CD8-positive, alpha-beta T cell (primary cell): ENCODE measurements at regions of chr16 and their contacts with region 1.

Region 1: GRCh38 chr16:50747207-50747956 is 5.5 kb downstream of the CYLD start:
- DNase-seq: peak in 3 of 9 experiments; percentile 21 to 80 (median 67)
- ATAC-seq: peak; percentile 68
- H3K4me3 ChIP-seq: peak overlapping the region; percentile 12 to 23
- H3K4me3 Mint-ChIP-seq: peak overlapping the region; percentile 80
- H3K27ac ChIP-seq: peak overlapping the region; percentile 47 to 99
- H3K27ac Mint-ChIP-seq: peak overlapping the region; percentile 94
- H3K4me1 ChIP-seq: peaks cover 65% of the 10 kb centered on the region
- H3K4me1 Mint-ChIP-seq: peaks cover 71% of the 10 kb centered on the region
- H3K27me3 ChIP-seq: no peaks in the 10 kb centered on the region
- H3K27me3 Mint-ChIP-seq: no peaks in the 10 kb centered on the region
- CTCF ChIP-seq: peak; percentile 67

Region 2: DNA sequence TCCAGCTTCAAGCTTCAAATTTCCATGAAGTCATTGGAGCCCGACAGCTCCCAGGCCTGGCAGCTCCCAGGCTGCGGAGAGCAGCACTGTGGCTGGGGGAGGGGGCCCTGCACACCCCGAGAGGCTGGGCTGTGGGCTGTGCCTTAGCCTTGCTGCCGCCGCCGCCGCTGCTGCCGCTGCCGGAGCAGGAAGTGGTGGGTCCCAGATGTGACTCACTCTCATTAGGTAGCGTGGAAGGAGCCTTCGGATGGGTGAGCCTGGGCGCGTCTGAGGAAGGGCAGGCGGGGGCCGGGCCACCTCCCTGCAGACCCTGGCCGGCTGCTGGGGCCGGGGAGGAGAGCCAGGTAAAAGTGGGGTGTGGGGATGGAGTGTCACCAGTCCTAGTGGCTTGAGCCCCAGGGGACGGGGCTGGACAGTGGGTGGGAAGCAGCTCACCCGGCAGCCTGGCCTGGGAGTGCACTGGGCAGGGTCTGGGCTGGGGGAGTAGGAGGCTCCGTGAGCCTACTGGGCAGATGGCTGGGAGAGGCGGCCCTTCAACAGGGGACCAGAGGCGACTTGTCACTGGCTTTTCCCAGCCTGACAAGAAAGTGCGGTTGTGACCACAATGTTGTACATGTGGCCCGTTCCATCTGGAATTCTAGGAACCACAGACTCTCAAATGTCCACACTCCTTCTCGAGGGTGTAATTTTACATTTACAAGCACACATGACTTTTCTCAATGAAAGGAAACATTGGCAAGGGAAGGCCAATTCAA is 480.9 kb before region 1 on chr16 and contains the start of gene ADCY7:
- CTCF ChIA-PET with region 1: no interaction called
- POLR2A ChIA-PET with region 1: no interaction called
- intact Hi-C with region 1: loop called (anchors 5 kb)
- DNase-seq: peak; percentile 58 to 90 (median 88)
- ATAC-seq: peak; percentile 83
- H3K4me3 ChIP-seq: peak within 1 kb of the TSS; percentile 91 to 94
- H3K4me3 Mint-ChIP-seq: peak within 1 kb of the TSS; percentile 97
- H3K27ac ChIP-seq: peak within 1 kb of the TSS; percentile 77 to 86
- H3K27ac Mint-ChIP-seq: peak within 1 kb of the TSS; percentile 98
- H3K4me1 ChIP-seq: peaks cover 68% of the 10 kb centered on the region
- H3K4me1 Mint-ChIP-seq: peaks cover 71% of the 10 kb centered on the region
- H3K27me3 ChIP-seq: no peaks in the 10 kb centered on the region
- H3K27me3 Mint-ChIP-seq: no peaks in the 10 kb centered on the region
- CTCF ChIP-seq: no peak
- total RNA-seq, gene ADCY7: 117 to 126 TPM

Region 3: DNA sequence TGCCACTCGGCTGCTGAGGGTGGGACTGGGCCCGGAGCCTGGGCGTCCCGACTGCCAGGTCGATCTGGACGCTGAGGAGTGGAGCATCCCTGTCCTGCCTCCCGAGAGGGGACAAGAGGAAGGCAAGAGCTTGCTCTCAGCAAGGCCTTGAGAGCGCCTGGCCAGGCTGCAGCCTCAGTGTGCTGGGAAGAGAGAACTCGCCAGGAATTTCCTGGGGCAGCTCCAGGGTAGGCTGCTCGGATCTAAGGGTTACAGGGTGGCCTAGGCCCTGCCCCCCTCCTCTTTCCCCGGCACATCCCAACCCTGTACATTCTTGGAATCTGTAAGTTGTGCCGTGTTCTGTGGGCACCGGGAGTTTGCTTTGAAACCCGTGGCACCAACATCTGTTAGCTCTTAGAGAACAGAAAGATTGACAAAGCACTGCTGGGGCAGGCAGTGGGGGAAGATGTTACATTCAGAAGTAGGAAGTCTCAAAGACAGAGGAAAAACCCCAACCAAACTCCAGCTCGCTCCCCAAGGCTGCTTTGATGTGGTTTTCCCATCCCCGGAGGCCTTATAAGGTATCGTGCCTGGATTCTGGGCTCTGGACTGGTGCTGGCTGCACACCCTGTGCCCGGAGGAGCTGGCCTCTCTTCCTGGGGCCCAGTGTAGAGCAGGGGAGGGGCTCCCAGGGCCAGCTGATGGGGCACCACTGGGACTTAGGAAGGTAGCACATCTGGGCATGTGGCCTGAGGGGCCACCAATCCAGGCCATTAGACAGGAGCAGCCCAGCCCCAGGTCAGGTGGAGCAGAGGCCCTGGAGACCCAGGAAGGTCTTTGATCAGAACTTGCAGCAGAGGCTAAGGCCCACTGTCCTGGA is 143.9 kb before region 1 on chr16:
- CTCF ChIA-PET with region 1: no interaction called
- POLR2A ChIA-PET with region 1: no interaction called
- intact Hi-C with region 1: loop called in 1 of 2 experiments (anchors 5 kb)
- DNase-seq: peak in 2 of 9 experiments; percentile 11 to 32
- ATAC-seq: no peak
- H3K4me3 ChIP-seq: no peak overlapping the region
- H3K4me3 Mint-ChIP-seq: peak overlapping the region; percentile 15
- H3K27ac ChIP-seq: no peak overlapping the region
- H3K27ac Mint-ChIP-seq: no peak overlapping the region
- H3K4me1 ChIP-seq: peaks cover 25% of the 10 kb centered on the region
- H3K4me1 Mint-ChIP-seq: peaks cover 30% of the 10 kb centered on the region
- H3K27me3 ChIP-seq: no peaks in the 10 kb centered on the region
- H3K27me3 Mint-ChIP-seq: no peaks in the 10 kb centered on the region
- CTCF ChIP-seq: no peak

Region 4: DNA sequence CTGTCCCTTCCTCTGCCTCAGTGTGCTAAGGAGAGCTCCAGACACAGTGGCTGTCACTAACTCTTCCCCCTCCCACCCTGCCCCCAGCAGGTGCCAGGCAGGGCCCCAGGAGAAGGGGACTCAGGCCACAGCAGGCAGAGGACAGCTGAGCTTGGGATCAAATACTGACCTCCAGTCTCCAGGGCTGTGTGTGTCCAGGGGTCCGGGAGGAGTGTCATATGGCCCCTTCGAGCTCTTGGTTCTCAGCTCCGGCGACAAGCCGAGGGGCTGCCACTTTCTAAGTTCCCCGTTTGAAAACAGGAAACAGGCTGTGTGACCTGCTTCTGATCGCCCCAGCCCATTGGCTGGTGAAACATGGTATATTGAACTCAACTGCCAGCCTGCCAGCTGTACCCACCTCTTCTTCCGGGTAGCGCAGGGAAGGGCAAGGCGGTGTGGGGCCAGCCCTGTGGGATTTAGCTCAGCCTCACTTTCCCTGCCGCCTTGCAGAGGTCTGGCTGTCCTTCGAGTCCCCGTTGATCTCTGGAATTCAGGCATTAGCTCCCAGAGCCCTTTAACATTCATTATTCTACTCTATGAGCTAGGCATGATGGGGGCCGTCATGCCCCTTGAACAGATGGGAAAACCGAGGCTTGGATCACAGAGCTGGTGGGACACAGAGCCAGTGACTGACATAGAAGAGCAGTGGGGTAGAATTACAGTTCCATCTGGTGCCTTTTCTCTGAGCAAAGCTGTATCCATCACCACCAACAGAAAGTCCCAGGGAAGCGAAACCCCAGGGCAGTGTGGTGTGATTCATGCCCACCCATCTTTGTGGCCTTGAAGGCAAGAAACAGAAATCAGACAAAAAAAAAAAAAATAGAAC is 66.1 kb before region 1 on chr16 and contains the start of gene SNX20:
- CTCF ChIA-PET with region 1: interaction called, 22 read pairs
- POLR2A ChIA-PET with region 1: interaction called, 7 read pairs
- intact Hi-C with region 1: loop called in 1 of 2 experiments (anchors 2 kb)
- DNase-seq: peak; percentile 43 to 87 (median 72)
- ATAC-seq: peak; percentile 92
- H3K4me3 ChIP-seq: peak within 1 kb of the TSS; percentile 65 to 88
- H3K4me3 Mint-ChIP-seq: peak within 1 kb of the TSS; percentile 92
- H3K27ac ChIP-seq: peak within 1 kb of the TSS; percentile 51 to 86
- H3K27ac Mint-ChIP-seq: peak within 1 kb of the TSS; percentile 97
- H3K4me1 ChIP-seq: peaks cover 74% of the 10 kb centered on the region
- H3K4me1 Mint-ChIP-seq: peaks cover 85% of the 10 kb centered on the region
- H3K27me3 ChIP-seq: no peaks in the 10 kb centered on the region
- H3K27me3 Mint-ChIP-seq: no peaks in the 10 kb centered on the region
- CTCF ChIP-seq: no peak
- total RNA-seq, gene SNX20: 18.6 to 20.1 TPM

Region 5: GRCh38 chr16:50791522-50791921 is 44.1 kb after region 1 on chr16:
- CTCF ChIA-PET with region 1: no interaction called
- POLR2A ChIA-PET with region 1: no interaction called
- intact Hi-C with region 1: loop called in 1 of 2 experiments (anchors 5 kb)
- DNase-seq: no peak
- ATAC-seq: no peak
- H3K4me3 ChIP-seq: no peak overlapping the region
- H3K4me3 Mint-ChIP-seq: no peak overlapping the region
- H3K27ac ChIP-seq: no peak overlapping the region
- H3K27ac Mint-ChIP-seq: no peak overlapping the region
- H3K4me1 ChIP-seq: no peaks in the 10 kb centered on the region
- H3K4me1 Mint-ChIP-seq: peaks cover 5% of the 10 kb centered on the region
- H3K27me3 ChIP-seq: no peaks in the 10 kb centered on the region
- H3K27me3 Mint-ChIP-seq: no peaks in the 10 kb centered on the region
- CTCF ChIP-seq: no peak